Activated CD8-positive, alpha-beta T cell treated with anti-CD3 and anti-CD28 coated beads, Interleukin-2, amount 10 ng/mL, durations not matched to agents 7 days and 5 days (primary cell): ENCODE measurements at regions of chr11 and their contacts with region 1.

Region 1: GRCh38 chr11:108733479-108734116 is 68.7 kb downstream of the DDX10 start:
- DNase-seq: peak; percentile 27
- ATAC-seq: peak; percentile 63
- H3K4me3 Mint-ChIP-seq: no peak overlapping the region
- H3K27ac Mint-ChIP-seq: peak overlapping the region; percentile 27
- H3K4me1 Mint-ChIP-seq: peaks cover 25% of the 10 kb centered on the region
- H3K27me3 Mint-ChIP-seq: no peaks in the 10 kb centered on the region

Region 2: GRCh38 chr11:108609681-108610080 is 123.9 kb before region 1 on chr11:
- CTCF ChIA-PET with region 1: no interaction called
- POLR2A ChIA-PET with region 1: no interaction called
- DNase-seq: no peak
- ATAC-seq: no peak
- H3K4me3 Mint-ChIP-seq: no peak overlapping the region
- H3K27ac Mint-ChIP-seq: no peak overlapping the region
- H3K4me1 Mint-ChIP-seq: no peaks in the 10 kb centered on the region
- H3K27me3 Mint-ChIP-seq: peaks cover 11% of the 10 kb centered on the region

Region 3: DNA sequence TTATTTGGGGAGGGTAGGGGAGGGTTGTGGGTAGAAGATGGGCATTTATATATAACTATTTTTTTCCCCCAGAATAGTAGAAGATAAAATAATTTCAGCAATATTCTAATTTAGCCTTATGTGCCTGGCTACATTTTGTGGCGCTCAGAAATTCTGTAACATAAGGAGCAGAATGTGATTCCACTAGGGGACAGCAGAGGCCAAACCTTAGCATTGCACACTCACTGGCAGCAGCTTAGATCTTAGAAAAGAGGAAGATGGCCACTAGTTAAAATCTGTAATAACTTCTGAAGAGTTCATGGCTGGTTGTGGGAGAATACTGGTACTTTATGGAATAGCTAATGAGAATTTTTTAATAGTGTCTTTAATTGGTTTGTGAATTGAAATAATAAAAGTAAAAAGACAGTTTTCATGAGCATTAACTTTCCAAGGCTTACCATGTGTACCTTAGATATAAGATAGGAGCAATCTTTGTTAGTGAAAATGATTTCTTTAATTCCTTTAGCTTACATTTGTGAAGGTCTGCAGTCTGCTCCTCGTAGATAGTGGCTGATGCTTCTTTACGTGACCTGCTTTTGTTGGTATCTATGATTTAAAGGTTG is 35.6 kb before region 1 on chr11:
- CTCF ChIA-PET with region 1: interaction called, 21 read pairs
- POLR2A ChIA-PET with region 1: no interaction called
- DNase-seq: peak; percentile 59
- ATAC-seq: peak; percentile 76
- H3K4me3 Mint-ChIP-seq: no peak overlapping the region
- H3K27ac Mint-ChIP-seq: no peak overlapping the region
- H3K4me1 Mint-ChIP-seq: peaks cover 2% of the 10 kb centered on the region
- H3K27me3 Mint-ChIP-seq: no peaks in the 10 kb centered on the region

Region 4: GRCh38 chr11:108748968-108749367 is 15.4 kb after region 1 on chr11:
- CTCF ChIA-PET with region 1: interaction called, 18 read pairs
- POLR2A ChIA-PET with region 1: no interaction called
- DNase-seq: no peak
- ATAC-seq: no peak
- H3K4me3 Mint-ChIP-seq: no peak overlapping the region
- H3K27ac Mint-ChIP-seq: no peak overlapping the region
- H3K4me1 Mint-ChIP-seq: peaks cover 10% of the 10 kb centered on the region
- H3K27me3 Mint-ChIP-seq: no peaks in the 10 kb centered on the region

Region 5: GRCh38 chr11:108853864-108854263 is 120.3 kb after region 1 on chr11:
- CTCF ChIA-PET with region 1: interaction called, 10 read pairs
- POLR2A ChIA-PET with region 1: no interaction called
- DNase-seq: peak; percentile 33
- ATAC-seq: peak; percentile 76
- H3K4me3 Mint-ChIP-seq: peak overlapping the region; percentile 78
- H3K27ac Mint-ChIP-seq: peak overlapping the region; percentile 96
- H3K4me1 Mint-ChIP-seq: peaks cover 27% of the 10 kb centered on the region
- H3K27me3 Mint-ChIP-seq: no peaks in the 10 kb centered on the region